ENCODE measurements at regions of chr3 and their contacts with region 1.

Region 1: DNA sequence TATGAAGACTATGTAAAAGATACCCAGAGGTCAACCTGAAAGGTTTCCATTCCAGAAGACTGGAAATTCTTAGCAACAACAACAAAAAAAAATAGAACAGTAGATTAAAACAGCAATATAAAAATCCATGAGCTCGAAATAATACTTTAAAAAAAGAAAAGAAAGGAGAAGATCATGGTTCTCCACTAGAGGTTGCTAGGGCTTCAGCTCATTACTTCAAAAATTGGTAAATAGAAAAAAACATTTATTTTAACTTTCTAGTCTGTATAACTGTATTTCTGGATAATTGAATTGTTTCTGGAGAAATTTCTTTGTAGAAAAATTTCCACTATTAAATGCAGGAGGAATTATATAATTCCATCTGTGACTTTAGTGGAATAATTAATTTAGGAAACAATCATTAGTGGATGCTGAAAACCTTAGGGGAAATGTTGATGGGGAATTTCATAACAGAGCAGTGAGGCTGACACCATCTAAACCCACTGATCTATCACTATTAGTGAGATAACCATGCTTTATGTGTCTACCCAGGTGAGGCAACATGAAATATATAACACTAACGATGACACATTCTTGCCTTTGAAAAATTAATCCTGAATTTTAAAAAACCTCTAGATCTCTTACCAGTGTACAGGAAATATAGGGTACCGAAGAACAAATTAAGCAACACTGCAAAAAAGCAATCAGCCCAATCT is 62.5 kb upstream of the SNRK start:
- DNase-seq: no peak
- ATAC-seq: no peak
- H3K4me3 ChIP-seq: no peak overlapping the region
- H3K27ac ChIP-seq: no peak overlapping the region
- H3K4me1 ChIP-seq: no peaks in the 10 kb centered on the region
- H3K27me3 ChIP-seq: no peaks in the 10 kb centered on the region
- CTCF ChIP-seq: peak; percentile 22 to 52 (median 49); a peak in 3 of 6 replicates
- POLR2A ChIP-seq: no peak
- RAD21 ChIP-seq: peak; percentile 67

Region 2: GRCh38 chr3:43378066-43378935 is 154.5 kb after region 1 on chr3:
- CTCF ChIA-PET with region 1: interaction called, 4 read pairs
- POLR2A ChIA-PET with region 1: no interaction called
- RAD21 ChIA-PET with region 1: no interaction called
- intact Hi-C with region 1: loop called (anchors 1 kb)
- DNase-seq: peak; percentile 39
- ATAC-seq: peak; percentile 95
- H3K4me3 ChIP-seq: no peak overlapping the region
- H3K27ac ChIP-seq: no peak overlapping the region
- H3K4me1 ChIP-seq: no peaks in the 10 kb centered on the region
- H3K27me3 ChIP-seq: no peaks in the 10 kb centered on the region
- CTCF ChIP-seq: peak; percentile 57 to 81 (median 72); a peak in 5 of 6 replicates
- POLR2A ChIP-seq: no peak
- RAD21 ChIP-seq: peak; percentile 74

Region 3: DNA sequence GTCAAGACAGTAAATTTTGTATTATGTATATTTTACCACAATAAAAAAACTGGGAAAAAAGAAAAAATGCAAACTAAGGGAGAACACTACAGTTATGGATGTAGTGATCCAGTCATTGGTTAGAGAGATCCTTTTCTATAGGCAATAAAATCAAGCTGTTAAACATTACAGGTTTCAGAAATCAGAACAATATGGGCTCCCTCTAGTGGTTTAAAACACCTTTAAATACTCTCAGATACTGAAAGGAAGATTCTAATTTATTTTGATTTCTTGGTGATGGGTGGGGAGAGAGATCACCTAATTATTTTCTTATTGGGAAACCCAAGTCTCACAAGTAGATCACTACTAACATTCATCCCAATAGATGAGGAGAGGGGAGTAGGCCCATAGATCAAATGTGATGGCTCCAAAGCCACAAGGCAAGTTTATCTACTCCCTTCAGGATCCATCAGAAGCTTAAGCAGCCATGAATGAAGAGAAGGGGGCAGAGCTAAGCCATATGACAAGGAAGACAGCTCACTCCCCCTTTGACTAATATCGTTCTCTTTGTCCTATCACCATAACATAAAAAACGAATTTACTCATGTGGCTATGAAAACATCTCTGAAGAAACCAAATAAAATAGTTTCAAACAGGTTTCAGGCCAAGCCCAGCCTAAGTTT is 279.4 kb after region 1 on chr3:
- CTCF ChIA-PET with region 1: interaction called, 13 read pairs
- POLR2A ChIA-PET with region 1: interaction called, 3 read pairs
- RAD21 ChIA-PET with region 1: no interaction called
- intact Hi-C with region 1: loop called (anchors 2 kb)
- DNase-seq: peak; percentile 12
- ATAC-seq: peak; percentile 72
- H3K4me3 ChIP-seq: no peak overlapping the region
- H3K27ac ChIP-seq: no peak overlapping the region
- H3K4me1 ChIP-seq: no peaks in the 10 kb centered on the region
- H3K27me3 ChIP-seq: no peaks in the 10 kb centered on the region
- CTCF ChIP-seq: peak; percentile 39 to 65 (median 56); a peak in 4 of 6 replicates
- POLR2A ChIP-seq: no peak
- RAD21 ChIP-seq: peak; percentile 68

Measured in HCT116 (cell line).